Common myeloid progenitor, CD34-positive (primary cell): ENCODE measurements at regions of chr11 and their contacts with region 1.

Region 1: GRCh38 chr11:62787005-62787759 is at the start of gene TMEM179B:
- DNase-seq: peak; percentile 98 to 99 (median 99)
- H3K4me3 ChIP-seq: peak within 1 kb of the TSS; percentile 75 to 100 (median 97)
- H3K27ac ChIP-seq: peak within 1 kb of the TSS; percentile 72 to 88
- H3K4me1 ChIP-seq: peaks cover 10 to 48% (median 40%) of the 10 kb centered on the region in 4 experiments
- H3K27me3 ChIP-seq: no peaks in the 10 kb centered on the region

Region 2: GRCh38 chr11:62726915-62727763 is 60.0 kb before region 1 on chr11 and contains the start of gene HNRNPUL2:
- CTCF ChIA-PET with region 1: interaction called, 22 read pairs
- POLR2A ChIA-PET with region 1: interaction called, 11 read pairs
- DNase-seq: peak; percentile 100
- H3K4me3 ChIP-seq: peak within 1 kb of the TSS; percentile 83 to 100 (median 89)
- H3K27ac ChIP-seq: peak within 1 kb of the TSS; percentile 84 to 95
- H3K4me1 ChIP-seq: peaks cover 23 to 47% (median 41%) of the 10 kb centered on the region in 4 experiments
- H3K27me3 ChIP-seq: no peaks in the 10 kb centered on the region

Region 3: GRCh38 chr11:62855571-62856332 is 68.6 kb after region 1 on chr11:
- CTCF ChIA-PET with region 1: interaction called, 10 read pairs
- POLR2A ChIA-PET with region 1: interaction called, 3 read pairs
- DNase-seq: peak; percentile 98 to 99 (median 98)
- H3K4me3 ChIP-seq: peak overlapping the region; percentile 79 to 100 (median 97)
- H3K27ac ChIP-seq: peak overlapping the region; percentile 55 to 91
- H3K4me1 ChIP-seq: peaks cover 25 to 54% (median 38%) of the 10 kb centered on the region in 4 experiments
- H3K27me3 ChIP-seq: no peaks in the 10 kb centered on the region

Region 4: GRCh38 chr11:62860835-62861563 is 73.8 kb after region 1 on chr11:
- CTCF ChIA-PET with region 1: interaction called, 54 read pairs
- POLR2A ChIA-PET with region 1: interaction called, 5 read pairs
- DNase-seq: no peak
- H3K4me3 ChIP-seq: no peak overlapping the region
- H3K27ac ChIP-seq: no peak overlapping the region
- H3K4me1 ChIP-seq: peaks cover 4 to 45% (median 16%) of the 10 kb centered on the region in 4 experiments
- H3K27me3 ChIP-seq: no peaks in the 10 kb centered on the region

Region 5: GRCh38 chr11:62880803-62881578 is 93.8 kb after region 1 on chr11 and contains the start of gene SLC3A2:
- CTCF ChIA-PET with region 1: interaction called, 15 read pairs
- POLR2A ChIA-PET with region 1: interaction called, 3 read pairs
- DNase-seq: peak; percentile 87 to 94 (median 90)
- H3K4me3 ChIP-seq: peak within 1 kb of the TSS; percentile 86 to 100 (median 95)
- H3K27ac ChIP-seq: peak within 1 kb of the TSS; percentile 98 to 99
- H3K4me1 ChIP-seq: peaks cover 15 to 48% (median 32%) of the 10 kb centered on the region in 4 experiments
- H3K27me3 ChIP-seq: no peaks in the 10 kb centered on the region